ENCODE measurements at regions of chr16 and their contacts with region 1.

Region 1: DNA sequence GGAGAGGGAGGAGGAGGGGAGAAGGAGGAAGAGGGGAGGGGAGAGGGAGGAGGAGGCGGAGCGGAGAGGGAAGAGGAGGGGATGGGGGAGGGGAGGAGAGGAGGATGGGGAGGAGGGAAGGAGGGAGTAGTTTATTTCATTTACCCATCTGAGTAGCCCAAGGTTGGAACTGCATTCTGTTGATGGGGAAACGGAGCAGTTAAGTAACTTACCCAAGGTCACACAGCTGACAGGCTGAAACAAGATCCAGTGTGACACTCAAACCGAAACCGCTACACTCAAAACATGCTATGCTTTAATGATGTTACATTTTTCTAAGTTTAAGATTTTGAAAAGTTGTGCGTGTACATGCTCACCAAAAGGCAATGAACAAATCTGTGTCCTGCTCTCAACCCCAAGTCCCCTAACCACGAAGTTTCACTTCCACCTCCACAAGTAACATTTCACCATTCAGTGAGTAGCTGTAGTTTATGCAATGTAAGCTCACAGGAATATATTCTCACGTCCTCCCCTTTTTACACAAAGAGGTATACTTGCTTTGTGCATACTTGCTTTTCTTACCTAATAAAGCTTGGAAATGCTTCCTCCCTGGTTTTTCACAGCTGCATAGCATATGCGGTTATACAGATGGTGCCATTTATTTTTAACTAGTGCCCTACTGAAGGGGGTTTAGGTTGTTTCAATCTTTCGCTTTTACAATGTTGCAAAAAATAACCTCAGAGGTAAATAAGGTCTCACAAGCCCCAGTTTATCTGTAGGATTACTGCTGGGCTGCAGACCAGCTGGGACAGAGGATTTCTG is 275.3 kb downstream of the PARN start:
- DNase-seq: peak; percentile 97
- H3K4me3 ChIP-seq: no peak overlapping the region
- H3K27ac ChIP-seq: peak overlapping the region; percentile 97
- H3K4me1 ChIP-seq: peaks cover 86% of the 10 kb centered on the region
- CTCF ChIP-seq: no peak

Region 2: DNA sequence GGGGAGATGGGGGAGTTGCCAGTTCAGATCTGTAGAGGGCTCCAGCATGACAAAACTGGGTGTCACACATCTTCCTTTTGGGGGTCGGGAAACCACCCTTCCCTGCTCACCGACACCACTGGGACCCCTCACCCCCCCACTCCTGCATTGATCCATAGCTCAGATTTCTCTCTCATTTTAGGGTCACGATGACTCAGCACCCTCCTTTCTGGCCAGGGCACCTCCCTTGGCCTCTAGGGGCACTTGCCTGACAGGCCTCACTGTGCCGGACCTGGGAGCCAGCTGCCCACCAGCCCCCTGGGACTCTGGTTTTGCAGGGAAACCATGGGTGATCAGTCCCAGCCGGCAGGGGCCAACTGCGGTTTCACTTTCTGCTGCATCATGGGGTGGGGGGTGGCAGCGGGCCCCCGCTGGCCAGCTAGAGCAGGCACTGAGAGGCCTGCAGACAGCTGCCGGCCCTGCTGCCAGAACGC is 44.2 kb before region 1 on chr16:
- CTCF ChIA-PET with region 1: no interaction called
- POLR2A ChIA-PET with region 1: interaction called, 24 read pairs
- intact Hi-C with region 1: loop called (anchors 1 kb)
- DNase-seq: peak; percentile 84
- H3K4me3 ChIP-seq: peak overlapping the region; percentile 99
- H3K27ac ChIP-seq: peak overlapping the region; percentile 94
- H3K4me1 ChIP-seq: peaks cover 89% of the 10 kb centered on the region
- CTCF ChIP-seq: peak; percentile 65

Region 3: DNA sequence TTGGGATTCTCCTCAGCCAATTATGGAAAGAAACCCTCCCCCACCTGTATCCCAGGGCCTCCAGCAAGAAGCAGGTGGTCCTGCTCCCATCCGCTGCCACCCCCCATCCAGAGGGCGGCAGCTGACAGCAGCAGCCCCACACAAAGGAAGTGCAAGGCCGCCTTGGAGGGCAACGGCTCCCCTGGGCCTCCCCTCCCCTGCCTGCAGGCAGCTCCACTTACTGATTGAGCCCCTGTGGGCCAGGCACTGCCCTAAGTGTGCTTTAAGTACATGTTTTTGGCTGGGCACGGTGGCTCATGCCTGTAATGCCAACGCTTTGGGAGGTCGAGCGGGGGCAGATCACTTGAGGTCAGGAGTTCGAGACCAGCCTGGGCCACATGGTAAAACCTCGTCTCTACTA is 17.7 kb after region 1 on chr16:
- CTCF ChIA-PET with region 1: interaction called, 3 read pairs
- POLR2A ChIA-PET with region 1: interaction called, 19 read pairs
- intact Hi-C with region 1: loop called (anchors 1 kb)
- DNase-seq: peak; percentile 41
- H3K4me3 ChIP-seq: no peak overlapping the region
- H3K27ac ChIP-seq: no peak overlapping the region
- H3K4me1 ChIP-seq: peaks cover 42% of the 10 kb centered on the region
- CTCF ChIP-seq: no peak

Region 4: DNA sequence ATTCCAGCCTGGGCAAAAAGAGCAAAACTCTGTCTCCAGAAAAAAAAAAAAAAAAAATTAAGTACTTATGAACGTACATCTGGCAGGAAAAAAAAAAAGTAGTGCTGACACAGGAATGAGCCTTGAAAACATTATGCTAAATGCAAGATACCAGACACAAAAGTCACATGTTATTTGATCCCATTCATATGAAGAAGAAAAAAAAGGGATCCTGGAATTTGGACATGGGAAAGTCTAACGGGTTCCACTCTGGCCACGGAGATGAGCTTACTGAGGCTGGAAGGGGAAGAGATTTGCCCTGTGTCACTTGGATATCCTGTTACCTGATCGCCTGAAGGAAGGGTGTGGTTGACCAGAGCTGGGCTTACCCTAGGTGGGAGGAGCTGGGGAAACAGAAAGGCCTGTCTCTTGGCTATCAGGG is 23.4 kb after region 1 on chr16:
- CTCF ChIA-PET with region 1: interaction called, 3 read pairs
- POLR2A ChIA-PET with region 1: interaction called, 19 read pairs
- intact Hi-C with region 1: loop called (anchors 1 kb)
- DNase-seq: no peak
- H3K4me3 ChIP-seq: no peak overlapping the region
- H3K27ac ChIP-seq: no peak overlapping the region
- H3K4me1 ChIP-seq: peaks cover 39% of the 10 kb centered on the region
- CTCF ChIP-seq: no peak

Region 5: GRCh38 chr16:14511800-14512135 is 157.0 kb after region 1 on chr16:
- CTCF ChIA-PET with region 1: no interaction called
- POLR2A ChIA-PET with region 1: no interaction called
- intact Hi-C with region 1: loop called (anchors 1 kb)
- DNase-seq: no peak
- H3K4me3 ChIP-seq: no peak overlapping the region
- H3K27ac ChIP-seq: no peak overlapping the region
- H3K4me1 ChIP-seq: no peaks in the 10 kb centered on the region
- CTCF ChIP-seq: no peak

Region 6: GRCh38 chr16:14608111-14608566 is 253.4 kb after region 1 on chr16:
- CTCF ChIA-PET with region 1: no interaction called
- POLR2A ChIA-PET with region 1: no interaction called
- intact Hi-C with region 1: loop called (anchors 2 kb)
- DNase-seq: peak; percentile 64
- H3K4me3 ChIP-seq: peak overlapping the region; percentile 64
- H3K27ac ChIP-seq: peak overlapping the region; percentile 96
- H3K4me1 ChIP-seq: peaks cover 71% of the 10 kb centered on the region
- CTCF ChIP-seq: no peak